ENCODE measurements at regions of chr3 and their contacts with region 1.

Region 1: GRCh38 chr3:183298701-183299153 is 45.7 kb downstream of the B3GNT5 start:
- DNase-seq: no peak
- H3K4me3 ChIP-seq: no peak overlapping the region
- H3K27ac ChIP-seq: no peak overlapping the region
- H3K4me1 ChIP-seq: peaks cover 42% of the 10 kb centered on the region
- H3K27me3 ChIP-seq: no peaks in the 10 kb centered on the region
- CTCF ChIP-seq: no peak

Region 2: DNA sequence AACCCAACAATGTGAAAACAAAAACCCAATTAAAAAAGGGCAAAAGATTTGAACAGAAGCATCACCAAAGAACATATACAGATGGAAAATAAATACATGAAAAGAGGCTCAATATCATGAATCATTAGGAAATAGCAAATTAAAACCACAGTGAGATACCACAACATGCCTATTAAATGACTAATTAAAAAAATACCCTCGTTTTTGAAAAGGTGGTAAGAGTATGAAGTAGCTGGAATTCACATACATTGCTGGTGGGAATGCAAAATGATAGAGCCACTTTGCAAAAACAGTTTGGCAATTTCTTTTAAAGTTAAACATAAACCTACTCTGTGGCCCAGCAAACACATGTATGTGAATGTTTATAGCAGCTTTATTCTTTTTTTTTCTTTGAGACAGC is 30.1 kb after region 1 on chr3:
- CTCF ChIA-PET with region 1: no interaction called
- dilution Hi-C with region 1: loop called (anchors 5 kb)
- in situ Hi-C with region 1: no loop called
- intact Hi-C with region 1: no loop called
- DNase-seq: peak; percentile 76
- H3K4me3 ChIP-seq: no peak overlapping the region
- H3K27ac ChIP-seq: no peak overlapping the region
- H3K4me1 ChIP-seq: peaks cover 19% of the 10 kb centered on the region
- H3K27me3 ChIP-seq: no peaks in the 10 kb centered on the region
- CTCF ChIP-seq: no peak

Region 3: DNA sequence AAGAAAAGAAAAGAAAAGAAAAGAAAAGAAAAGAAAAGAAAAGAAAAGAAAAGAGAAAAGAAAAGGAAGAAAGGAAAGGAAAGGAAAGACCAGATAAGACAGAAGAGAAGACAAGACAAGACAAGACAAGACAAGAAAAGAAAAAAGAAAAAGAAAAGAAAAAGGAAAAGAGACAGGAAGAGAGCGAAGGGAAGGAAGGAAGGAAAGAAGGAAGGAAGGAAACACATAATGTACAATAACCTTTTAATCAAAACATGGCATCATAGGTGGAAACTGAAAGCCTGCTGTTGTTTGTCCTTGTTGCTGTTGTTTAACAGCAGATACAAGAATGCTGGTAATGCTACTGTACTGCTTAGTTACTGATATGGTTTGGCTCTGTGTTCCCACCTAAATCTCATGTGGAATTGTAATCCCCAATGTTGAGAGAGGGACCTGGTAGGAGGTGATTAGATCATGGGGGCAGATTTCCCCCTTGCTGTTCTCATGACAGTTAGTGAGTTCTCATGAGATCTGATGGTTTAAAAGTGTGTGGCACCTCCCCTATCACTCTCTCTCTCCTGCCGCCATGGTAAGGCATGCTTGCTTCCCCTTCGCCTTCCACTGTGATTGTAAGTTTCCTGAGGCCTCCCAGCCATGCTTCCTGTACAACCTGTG is 62.4 kb after region 1 on chr3:
- CTCF ChIA-PET with region 1: no interaction called
- dilution Hi-C with region 1: loop called (anchors 5 kb)
- in situ Hi-C with region 1: no loop called
- intact Hi-C with region 1: no loop called
- DNase-seq: no peak
- H3K4me3 ChIP-seq: no peak overlapping the region
- H3K27ac ChIP-seq: no peak overlapping the region
- H3K4me1 ChIP-seq: no peaks in the 10 kb centered on the region
- H3K27me3 ChIP-seq: no peaks in the 10 kb centered on the region
- CTCF ChIP-seq: no peak